ENCODE measurements at regions of chr21 and their contacts with region 1.

Region 1: DNA sequence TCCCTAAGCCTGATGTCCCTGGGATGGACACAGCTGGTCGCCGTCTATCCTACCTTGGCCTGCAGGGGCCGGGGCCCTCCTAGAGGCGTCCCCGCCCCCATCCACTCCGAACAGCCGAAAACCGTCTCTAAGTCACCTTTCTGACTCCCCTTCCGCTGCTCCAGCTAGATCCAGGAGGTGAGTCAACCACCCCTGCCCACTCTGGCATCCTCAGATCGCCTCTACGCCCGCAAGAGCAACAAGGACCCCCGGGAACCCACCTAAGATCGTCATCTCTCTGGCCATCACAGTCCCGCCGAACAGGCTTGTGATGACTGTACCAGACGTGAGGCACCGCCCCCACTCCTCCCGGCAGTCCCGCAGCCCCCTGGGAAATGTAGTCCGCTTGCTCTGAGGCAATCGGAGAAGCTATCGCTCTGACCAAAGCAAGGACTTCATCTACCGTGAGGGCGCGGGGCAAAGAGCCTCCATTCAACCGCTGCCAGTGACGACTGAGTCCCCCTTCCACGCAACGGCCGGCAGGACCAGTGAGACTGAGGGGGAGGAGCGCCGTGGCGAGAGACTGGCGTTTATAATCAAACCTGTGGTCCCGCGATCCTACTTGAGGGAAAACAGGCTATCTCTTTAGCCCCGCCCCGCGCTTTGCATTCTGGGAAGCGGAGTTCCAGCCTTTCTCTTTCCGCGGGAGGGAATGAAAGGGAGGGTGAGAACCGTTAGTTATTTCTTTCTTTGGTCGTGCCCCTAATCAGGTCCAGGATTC is at the start of gene HSPA13:
- DNase-seq: peak; percentile 100
- H3K4me3 Mint-ChIP-seq: peak within 1 kb of the TSS; percentile 94
- H3K27ac Mint-ChIP-seq: peak within 1 kb of the TSS; percentile 96
- H3K4me1 Mint-ChIP-seq: peaks cover 35% of the 10 kb centered on the region
- H3K27me3 Mint-ChIP-seq: peaks cover 2% of the 10 kb centered on the region
- total RNA-seq, gene HSPA13: 40.9 and 41.6 TPM in 2 replicates

Region 2: DNA sequence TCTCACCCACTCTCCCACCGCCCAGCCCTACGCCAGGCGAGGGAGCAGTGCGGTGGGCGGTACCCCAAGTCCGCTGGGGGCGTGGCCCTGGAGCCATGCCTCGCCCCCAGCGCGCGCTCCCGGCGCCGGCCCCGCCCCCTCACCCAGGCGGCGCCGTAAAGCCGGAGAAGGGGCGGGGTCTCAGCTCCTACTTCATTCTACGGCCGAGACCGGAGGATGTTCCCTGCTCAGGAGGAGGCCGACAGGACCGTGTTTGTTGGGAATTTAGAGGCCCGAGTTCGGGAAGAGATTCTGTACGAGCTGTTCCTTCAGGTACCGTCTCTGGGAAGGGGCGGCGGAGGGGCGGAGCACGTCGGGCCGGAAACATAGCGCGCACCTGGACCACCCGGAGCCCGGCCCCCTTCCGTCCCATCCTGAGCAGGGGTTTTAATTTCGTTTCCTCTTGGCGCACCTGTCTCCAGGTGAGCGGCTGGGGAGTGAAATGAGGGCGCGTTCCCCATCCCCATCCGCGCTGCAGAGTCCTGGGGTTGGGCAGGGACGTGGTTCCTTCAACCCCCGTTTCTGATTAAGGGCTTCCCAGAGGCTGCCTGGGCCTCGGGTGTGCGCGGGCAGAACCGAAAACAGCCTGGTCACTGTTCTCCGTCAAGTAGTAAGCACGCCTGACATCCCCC is 166.9 kb before region 1 on chr21 and contains the start of gene RBM11:
- intact Hi-C with region 1: loop called (anchors 1 kb)
- DNase-seq: peak; percentile 91
- H3K4me3 Mint-ChIP-seq: peak within 1 kb of the TSS; percentile 84
- H3K27ac Mint-ChIP-seq: no peak within 1 kb of the TSS
- H3K4me1 Mint-ChIP-seq: peaks cover 4% of the 10 kb centered on the region
- H3K27me3 Mint-ChIP-seq: peaks cover 21% of the 10 kb centered on the region
- total RNA-seq, gene RBM11: 0.84 and 1.4 TPM in 2 replicates

Region 3: GRCh38 chr21:14259747-14260146 is 123.3 kb before region 1 on chr21:
- intact Hi-C with region 1: loop called (anchors 10 kb)
- DNase-seq: no peak
- H3K4me3 Mint-ChIP-seq: no peak overlapping the region
- H3K27ac Mint-ChIP-seq: no peak overlapping the region
- H3K4me1 Mint-ChIP-seq: no peaks in the 10 kb centered on the region
- H3K27me3 Mint-ChIP-seq: peaks cover 12% of the 10 kb centered on the region

Region 4: GRCh38 chr21:14325595-14325994 is 57.4 kb before region 1 on chr21:
- intact Hi-C with region 1: no loop called
- DNase-seq: no peak
- H3K4me3 Mint-ChIP-seq: no peak overlapping the region
- H3K27ac Mint-ChIP-seq: no peak overlapping the region
- H3K4me1 Mint-ChIP-seq: no peaks in the 10 kb centered on the region
- H3K27me3 Mint-ChIP-seq: peaks cover 16% of the 10 kb centered on the region

Region 5: DNA sequence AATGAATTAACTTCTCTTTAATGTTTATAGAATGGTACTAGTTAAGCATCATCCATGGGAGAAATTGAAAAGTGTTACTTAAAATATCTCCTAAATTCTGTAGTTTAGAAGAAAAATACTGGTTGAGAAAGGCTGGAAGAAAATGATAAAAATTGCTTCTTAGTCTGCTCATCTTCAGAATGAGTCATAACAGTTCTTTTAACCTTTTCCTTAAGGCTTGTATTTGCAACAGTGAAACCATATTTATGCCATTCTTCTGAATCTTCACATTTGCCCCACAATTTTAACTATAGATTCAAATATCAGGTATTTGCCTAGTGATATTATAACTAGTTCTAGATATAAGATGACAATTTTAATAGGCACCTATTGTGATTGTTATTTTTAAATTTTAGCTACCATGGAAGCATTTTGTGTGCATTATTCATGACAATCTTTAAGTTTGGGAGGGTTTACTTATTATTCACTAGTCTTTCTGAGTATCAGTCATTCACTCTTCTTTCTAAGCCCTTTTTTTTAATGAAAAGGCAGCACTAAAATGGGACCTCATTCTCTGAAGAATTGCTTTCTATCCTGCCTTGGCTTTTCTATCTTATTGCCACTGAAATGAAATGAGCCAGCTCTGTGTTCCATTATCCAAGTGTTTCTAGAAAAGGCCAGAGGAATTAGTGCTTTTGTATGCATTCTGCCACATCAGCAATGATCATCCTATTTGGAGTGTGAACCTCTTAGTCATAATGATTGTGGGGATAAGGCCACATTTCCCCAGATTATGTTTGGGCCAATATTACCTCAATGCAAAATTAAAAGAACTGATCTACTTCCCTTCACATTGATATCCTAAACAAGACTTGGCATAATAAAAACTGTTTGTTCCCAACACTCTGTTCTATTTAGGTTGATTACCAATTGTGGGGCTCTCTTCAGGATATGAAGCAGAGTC is 104.7 kb after region 1 on chr21:
- intact Hi-C with region 1: loop called (anchors 2 kb)
- DNase-seq: no peak
- H3K4me3 Mint-ChIP-seq: peak overlapping the region; percentile 28
- H3K27ac Mint-ChIP-seq: peak overlapping the region; percentile 87
- H3K4me1 Mint-ChIP-seq: peaks cover 60% of the 10 kb centered on the region
- H3K27me3 Mint-ChIP-seq: no peaks in the 10 kb centered on the region

Region 6: GRCh38 chr21:15437883-15438282 is 1054.9 kb after region 1 on chr21:
- intact Hi-C with region 1: loop called (anchors 5 kb)
- DNase-seq: peak; percentile 58
- H3K4me3 Mint-ChIP-seq: no peak overlapping the region
- H3K27ac Mint-ChIP-seq: no peak overlapping the region
- H3K4me1 Mint-ChIP-seq: peaks cover 7% of the 10 kb centered on the region
- H3K27me3 Mint-ChIP-seq: no peaks in the 10 kb centered on the region

Region 7: GRCh38 chr21:15514073-15514946 is 1131.3 kb after region 1 on chr21:
- intact Hi-C with region 1: loop called (anchors 10 kb)
- DNase-seq: peak; percentile 90
- H3K4me3 Mint-ChIP-seq: peak overlapping the region; percentile 29
- H3K27ac Mint-ChIP-seq: peak overlapping the region; percentile 61
- H3K4me1 Mint-ChIP-seq: peaks cover 18% of the 10 kb centered on the region
- H3K27me3 Mint-ChIP-seq: no peaks in the 10 kb centered on the region

Measured in activated CD4-positive, alpha-beta T cell treated with anti-CD3 and anti-CD28 coated beads, Interleukin-2, amount 10 ng/mL, durations not matched to agents 24 days and 14 days (primary cell).